Right cardiac atrium (tissue), 5 donors: ENCODE measurements at regions of chr19 and their contacts with region 1.

Region 1: DNA sequence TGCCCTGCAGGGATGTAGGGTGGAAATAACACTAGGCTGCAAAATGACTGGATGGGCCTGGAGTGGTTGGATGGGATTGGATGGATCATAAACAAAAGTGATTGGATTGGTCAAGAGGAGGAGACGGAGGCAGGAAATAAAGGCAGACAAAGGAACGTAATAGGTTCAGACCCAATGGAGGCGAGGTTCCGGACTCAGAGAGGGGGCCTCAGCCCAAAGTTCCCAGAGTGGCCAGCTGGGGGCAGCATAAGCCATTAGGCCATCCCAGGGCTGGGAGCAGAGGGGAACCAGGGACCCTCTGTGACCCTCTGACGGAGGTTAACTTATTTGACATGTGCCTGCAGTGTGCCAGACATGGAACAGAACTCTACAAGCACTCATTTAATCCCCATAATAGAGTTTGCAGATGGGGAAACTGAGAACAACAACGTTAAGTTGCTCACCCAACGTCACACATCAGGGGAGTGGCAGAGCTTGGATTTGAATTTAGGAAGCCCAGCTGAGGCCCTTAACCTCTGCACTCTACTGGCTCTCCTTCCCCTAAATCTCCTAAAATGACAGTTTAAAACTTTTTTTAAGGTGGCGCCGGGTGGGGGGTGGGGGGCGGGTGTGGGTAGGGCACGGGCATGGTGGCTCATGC is 15.3 kb upstream of the MAP1S start:
- DNase-seq: peak; percentile 59 to 85 (median 80)
- ATAC-seq: peak; percentile 70 to 90
- H3K4me3 ChIP-seq: no peak overlapping the region
- H3K27ac ChIP-seq: no peak overlapping the region
- H3K4me1 ChIP-seq: no peaks in the 10 kb centered on the region
- H3K27me3 ChIP-seq: no peaks in the 10 kb centered on the region

Region 2: DNA sequence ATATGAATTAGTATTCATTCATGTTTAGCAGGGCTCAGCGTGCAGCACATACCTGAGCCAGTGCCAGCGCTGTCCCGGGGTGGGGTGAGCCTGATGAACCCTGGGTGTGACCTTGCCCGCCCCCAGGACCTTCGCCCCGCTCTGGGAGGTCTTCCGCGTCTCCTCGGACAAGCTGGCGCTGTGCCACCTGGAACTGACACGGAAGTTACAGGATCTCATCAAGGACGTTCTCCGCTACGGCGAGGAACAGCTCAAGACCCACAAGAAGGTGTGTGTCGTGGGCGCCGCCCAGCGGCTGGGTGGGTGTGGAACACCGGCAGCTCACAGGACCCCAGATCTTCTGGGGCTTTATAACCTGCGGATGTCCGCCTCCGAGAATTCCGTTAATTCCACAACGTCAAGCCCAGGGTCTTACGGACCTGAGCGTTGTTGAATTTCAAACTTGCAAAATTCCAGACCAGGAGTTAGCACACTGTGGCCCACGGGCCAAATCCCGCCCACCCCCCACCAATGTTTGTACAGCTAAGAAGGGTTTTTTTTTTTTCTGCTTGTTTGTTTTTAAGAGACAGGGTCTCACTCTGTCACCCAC is 62.7 kb after region 1 on chr19:
- intact Hi-C with region 1: loop called (anchors 5 to 10 kb)
- DNase-seq: peak; percentile 81 to 93 (median 92)
- ATAC-seq: peak; percentile 82 to 83
- H3K4me3 ChIP-seq: no peak overlapping the region
- H3K27ac ChIP-seq: no peak overlapping the region
- H3K4me1 ChIP-seq: no peaks in the 10 kb centered on the region
- H3K27me3 ChIP-seq: no peaks in the 10 kb centered on the region

Region 3: GRCh38 chr19:17775245-17775916 is 71.4 kb after region 1 on chr19:
- intact Hi-C with region 1: loop called in 2 of 4 experiments (anchors 10 kb)
- DNase-seq: peak in 1 of 3 donors; percentile 71
- ATAC-seq: no peak
- H3K4me3 ChIP-seq: no peak overlapping the region
- H3K27ac ChIP-seq: no peak overlapping the region
- H3K4me1 ChIP-seq: no peaks in the 10 kb centered on the region
- H3K27me3 ChIP-seq: no peaks in the 10 kb centered on the region

Region 4: DNA sequence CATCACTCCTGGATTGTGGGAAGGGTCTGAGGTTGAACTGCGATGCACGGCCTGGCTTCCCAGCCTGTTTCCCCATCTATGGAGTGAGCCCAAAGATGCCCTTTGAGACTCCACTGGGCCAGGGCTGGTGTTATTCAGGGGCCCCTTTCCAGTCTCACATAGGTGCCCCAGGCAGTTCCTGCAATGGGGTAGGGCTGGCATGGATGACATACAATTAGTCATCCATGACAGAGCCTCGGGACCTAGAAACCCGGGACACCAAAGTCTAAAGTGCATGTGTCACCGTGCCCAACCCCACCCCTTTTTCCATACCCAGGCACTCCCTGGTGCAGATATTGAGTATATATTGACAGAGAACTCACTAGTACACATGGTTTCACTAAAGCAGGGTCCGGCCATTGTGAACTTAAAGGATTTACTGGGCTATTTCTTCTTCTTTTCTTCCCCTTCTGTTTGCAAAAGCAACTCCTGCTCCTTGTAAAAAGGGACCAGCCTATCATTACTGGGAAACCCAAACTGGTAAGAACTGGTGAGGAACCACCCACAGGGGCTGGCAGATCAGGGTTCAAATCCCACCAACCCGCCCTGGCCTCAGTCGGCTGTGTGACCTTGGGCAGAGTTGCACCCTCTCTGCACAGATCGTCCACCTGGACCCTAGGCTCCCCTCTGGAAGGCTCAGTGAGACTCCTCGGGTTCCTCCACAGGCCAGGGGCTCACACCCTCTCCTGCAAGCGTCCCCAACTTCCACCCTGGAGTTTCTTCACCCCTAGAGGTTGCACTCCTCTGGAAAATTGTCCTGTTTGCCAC is 93.7 kb after region 1 on chr19:
- intact Hi-C with region 1: no loop called
- DNase-seq: no peak
- ATAC-seq: no peak
- H3K4me3 ChIP-seq: no peak overlapping the region
- H3K27ac ChIP-seq: no peak overlapping the region
- H3K4me1 ChIP-seq: no peaks in the 10 kb centered on the region
- H3K27me3 ChIP-seq: no peaks in the 10 kb centered on the region